Naive thymus-derived CD8-positive, alpha-beta T cell (primary cell): ENCODE measurements at regions of chr15 and their contacts with region 1.

Region 1: GRCh38 chr15:64651573-64652260 is 123.7 kb downstream of the RBPMS2 start:
- DNase-seq: peak in 8 of 10 donors; percentile 13 to 53 (median 34)
- ATAC-seq: peak; percentile 93 to 96
- H3K4me3 Mint-ChIP-seq: peak overlapping the region; percentile 50 to 83 (median 68)
- H3K27ac Mint-ChIP-seq: peak overlapping the region; percentile 76 to 94 (median 91)
- H3K4me1 Mint-ChIP-seq: peaks cover 16 to 57% (median 49%) of the 10 kb centered on the region in 4 donors
- H3K27me3 Mint-ChIP-seq: no peaks in the 10 kb centered on the region

Region 2: GRCh38 chr15:64634576-64635498 is 16.9 kb before region 1 on chr15:
- POLR2A ChIA-PET with region 1: interaction called, 13 read pairs
- DNase-seq: peak in 8 of 10 donors; percentile 23 to 63 (median 43)
- ATAC-seq: peak; percentile 68 to 75
- H3K4me3 Mint-ChIP-seq: peak overlapping the region; percentile 33 to 81 (median 72)
- H3K27ac Mint-ChIP-seq: peak overlapping the region; percentile 82 to 96 (median 90)
- H3K4me1 Mint-ChIP-seq: peaks cover 30 to 80% (median 69%) of the 10 kb centered on the region in 4 donors
- H3K27me3 Mint-ChIP-seq: no peaks in the 10 kb centered on the region